Activated T-helper 2 cell treated with anti-CD3 and anti-CD28 coated beads, Interferon-gamma antibody, Interleukin-2, Interleukin-4, amounts not matched to agents 10 μg/mL and 5 μg/mL and 100 μg/mL, durations not matched to agents 14 hours and 24 hours and 36 hours (primary cell): ENCODE measurements at regions of chr7 and their contacts with region 1.

Region 1: GRCh38 chr7:7640221-7641128 is at the start of gene UMAD1:
- DNase-seq: peak; percentile 99
- H3K4me3 Mint-ChIP-seq: peak within 1 kb of the TSS; percentile 94
- H3K27ac Mint-ChIP-seq: peak within 1 kb of the TSS; percentile 99
- H3K4me1 Mint-ChIP-seq: peaks cover 31% of the 10 kb centered on the region
- H3K27me3 Mint-ChIP-seq: no peaks in the 10 kb centered on the region
- total RNA-seq, gene UMAD1: 16.0 and 18.9 TPM in 2 replicates

Region 2: GRCh38 chr7:7566651-7567611 is 73.5 kb before region 1 on chr7 and contains the start of gene MIOS:
- intact Hi-C with region 1: loop called (anchors 1 kb)
- DNase-seq: peak; percentile 76
- H3K4me3 Mint-ChIP-seq: peak within 1 kb of the TSS; percentile 76
- H3K27ac Mint-ChIP-seq: peak within 1 kb of the TSS; percentile 61
- H3K4me1 Mint-ChIP-seq: peaks cover 27% of the 10 kb centered on the region
- H3K27me3 Mint-ChIP-seq: peaks cover 9% of the 10 kb centered on the region
- total RNA-seq, gene MIOS: 29.8 and 30.3 TPM in 2 replicates

Region 3: DNA sequence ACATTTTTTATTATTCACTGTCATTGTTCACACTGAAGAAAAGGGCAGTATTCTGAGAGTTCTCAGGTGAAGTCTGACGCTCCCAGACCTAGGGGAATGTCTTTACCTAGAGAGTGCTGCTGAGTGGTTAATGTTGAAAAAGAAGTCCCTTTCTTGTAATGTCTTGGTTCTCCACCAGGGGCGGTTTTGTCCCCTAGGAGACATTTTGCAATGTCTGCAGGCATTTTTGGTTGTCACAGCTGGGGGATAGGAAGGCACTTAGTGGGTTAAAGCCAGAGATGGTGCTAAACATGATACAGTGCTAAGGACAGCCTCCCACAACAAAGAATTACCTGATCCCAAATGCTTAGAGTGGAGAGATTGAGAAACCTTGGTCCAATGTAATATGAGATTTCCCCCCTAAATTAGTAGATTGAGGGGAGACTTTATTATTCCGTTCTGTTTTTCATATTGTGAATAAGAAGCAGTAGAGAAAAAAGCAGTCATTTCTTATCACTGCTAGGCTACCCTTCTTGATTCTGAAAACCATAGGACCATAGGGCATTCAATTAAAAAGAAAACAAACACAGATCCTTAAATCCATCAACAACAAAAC is 13.2 kb after region 1 on chr7:
- intact Hi-C with region 1: loop called (anchors 1 kb)
- DNase-seq: no peak
- H3K4me3 Mint-ChIP-seq: no peak overlapping the region
- H3K27ac Mint-ChIP-seq: peak overlapping the region; percentile 14
- H3K4me1 Mint-ChIP-seq: peaks cover 19% of the 10 kb centered on the region
- H3K27me3 Mint-ChIP-seq: no peaks in the 10 kb centered on the region

Region 4: GRCh38 chr7:7719236-7719635 is 78.8 kb after region 1 on chr7:
- intact Hi-C with region 1: loop called (anchors 1 kb)
- DNase-seq: peak; percentile 45
- H3K4me3 Mint-ChIP-seq: no peak overlapping the region
- H3K27ac Mint-ChIP-seq: peak overlapping the region; percentile 47
- H3K4me1 Mint-ChIP-seq: peaks cover 23% of the 10 kb centered on the region
- H3K27me3 Mint-ChIP-seq: no peaks in the 10 kb centered on the region

Region 5: GRCh38 chr7:8125680-8126444 is 485.4 kb after region 1 on chr7:
- intact Hi-C with region 1: loop called (anchors 2 kb)
- DNase-seq: peak; percentile 72
- H3K4me3 Mint-ChIP-seq: peak overlapping the region; percentile 64
- H3K27ac Mint-ChIP-seq: peak overlapping the region; percentile 98
- H3K4me1 Mint-ChIP-seq: peaks cover 76% of the 10 kb centered on the region
- H3K27me3 Mint-ChIP-seq: no peaks in the 10 kb centered on the region

Region 6: GRCh38 chr7:8176370-8177081 is 536.1 kb after region 1 on chr7:
- intact Hi-C with region 1: loop called (anchors 2 kb)
- DNase-seq: peak; percentile 62
- H3K4me3 Mint-ChIP-seq: peak overlapping the region; percentile 62
- H3K27ac Mint-ChIP-seq: peak overlapping the region; percentile 95
- H3K4me1 Mint-ChIP-seq: peaks cover 49% of the 10 kb centered on the region
- H3K27me3 Mint-ChIP-seq: no peaks in the 10 kb centered on the region

Region 7: GRCh38 chr7:8232999-8233847 is 592.7 kb after region 1 on chr7:
- intact Hi-C with region 1: loop called (anchors 1 kb)
- DNase-seq: no peak
- H3K4me3 Mint-ChIP-seq: no peak overlapping the region
- H3K27ac Mint-ChIP-seq: peak overlapping the region; percentile 30
- H3K4me1 Mint-ChIP-seq: peaks cover 14% of the 10 kb centered on the region
- H3K27me3 Mint-ChIP-seq: peaks cover 8% of the 10 kb centered on the region